ENCODE measurements at regions of chr9 and their contacts with region 1.

Region 1: GRCh38 chr9:79667749-79668454 is 96.1 kb downstream of the TLE4 start:
- DNase-seq: no peak
- H3K4me3 Mint-ChIP-seq: no peak overlapping the region
- H3K27ac Mint-ChIP-seq: no peak overlapping the region
- H3K4me1 Mint-ChIP-seq: peaks cover 31% of the 10 kb centered on the region
- H3K27me3 Mint-ChIP-seq: no peaks in the 10 kb centered on the region

Region 2: GRCh38 chr9:78994471-78994870 is 673.4 kb before region 1 on chr9:
- CTCF ChIA-PET with region 1: no interaction called
- POLR2A ChIA-PET with region 1: no interaction called
- intact Hi-C with region 1: no loop called
- DNase-seq: no peak
- H3K4me3 Mint-ChIP-seq: no peak overlapping the region
- H3K27ac Mint-ChIP-seq: no peak overlapping the region
- H3K4me1 Mint-ChIP-seq: no peaks in the 10 kb centered on the region
- H3K27me3 Mint-ChIP-seq: no peaks in the 10 kb centered on the region

Region 3: GRCh38 chr9:79630521-79631403 is 37.1 kb before region 1 on chr9:
- CTCF ChIA-PET with region 1: no interaction called
- POLR2A ChIA-PET with region 1: no interaction called
- intact Hi-C with region 1: loop called (anchors 5 kb)
- DNase-seq: no peak
- H3K4me3 Mint-ChIP-seq: no peak overlapping the region
- H3K27ac Mint-ChIP-seq: no peak overlapping the region
- H3K4me1 Mint-ChIP-seq: peaks cover 60% of the 10 kb centered on the region
- H3K27me3 Mint-ChIP-seq: no peaks in the 10 kb centered on the region

Region 4: GRCh38 chr9:79764381-79764780 is 96.5 kb after region 1 on chr9:
- CTCF ChIA-PET with region 1: no interaction called
- POLR2A ChIA-PET with region 1: no interaction called
- intact Hi-C with region 1: no loop called
- DNase-seq: no peak
- H3K4me3 Mint-ChIP-seq: no peak overlapping the region
- H3K27ac Mint-ChIP-seq: no peak overlapping the region
- H3K4me1 Mint-ChIP-seq: no peaks in the 10 kb centered on the region
- H3K27me3 Mint-ChIP-seq: peaks cover 2% of the 10 kb centered on the region

Measured in activated CD4-positive, alpha-beta memory T cell treated with anti-CD3 and anti-CD28 coated beads for 36 hours (primary cell).